ENCODE measurements at regions of chr5 and their contacts with region 1.

Region 1: DNA sequence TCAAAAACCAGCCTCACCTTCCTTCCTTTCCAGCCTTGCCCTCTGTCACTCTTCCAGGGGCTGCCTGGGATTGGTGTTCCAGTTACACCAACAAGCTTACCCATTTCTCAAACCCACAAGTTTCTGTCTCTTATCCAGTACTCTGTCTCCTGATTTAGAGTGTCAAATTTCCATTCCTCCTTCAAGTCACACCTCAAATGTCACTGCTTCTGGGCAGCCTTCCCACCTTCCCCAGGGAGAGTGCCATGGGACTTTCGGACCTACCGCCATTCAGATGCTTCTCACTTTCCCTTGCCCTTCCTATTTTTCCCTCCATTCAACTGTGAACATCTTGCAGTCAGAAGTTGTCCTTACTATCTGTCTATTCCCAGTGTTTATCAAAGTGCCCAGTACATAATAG is 2.0 kb upstream of the GRXCR2 start:
- DNase-seq: no peak
- ATAC-seq: no peak

Region 2: GRCh38 chr5:145704724-145705123 is 170.0 kb before region 1 on chr5:
- intact Hi-C with region 1: loop called (anchors 5 kb)
- DNase-seq: no peak
- ATAC-seq: no peak